ENCODE measurements at regions of chr5 and their contacts with region 1.

Region 1: DNA sequence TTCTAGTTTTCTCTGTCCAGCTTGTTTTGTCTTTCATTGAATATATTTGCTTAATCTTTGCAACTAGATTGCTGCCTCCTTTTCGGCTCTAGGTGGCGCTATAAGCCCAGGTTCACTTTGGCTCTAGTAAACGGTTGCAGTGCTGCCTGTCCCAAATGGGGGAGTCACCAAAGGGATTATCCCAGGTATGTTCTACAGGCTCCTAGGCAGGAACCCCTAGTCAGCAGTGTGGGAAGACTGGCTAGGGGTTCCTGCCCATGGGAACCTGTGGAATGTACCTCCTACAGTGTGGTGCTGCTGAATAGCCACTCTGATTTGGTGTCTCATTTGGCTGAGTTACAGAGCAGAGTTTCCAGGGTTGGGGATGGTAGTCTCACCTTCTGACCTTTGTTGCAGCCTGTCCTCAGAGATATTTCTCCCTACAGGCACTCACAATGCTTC is 85.2 kb downstream of the ARSB start:
- DNase-seq: no peak
- H3K4me3 ChIP-seq: no peak overlapping the region
- CTCF ChIP-seq: peak; percentile 70

Region 2: GRCh38 chr5:78738693-78739300 is 161.1 kb before region 1 on chr5:
- CTCF ChIA-PET with region 1: no interaction called
- POLR2A ChIA-PET with region 1: no interaction called
- DNase-seq: no peak
- H3K4me3 ChIP-seq: no peak overlapping the region
- CTCF ChIP-seq: no peak

Region 3: DNA sequence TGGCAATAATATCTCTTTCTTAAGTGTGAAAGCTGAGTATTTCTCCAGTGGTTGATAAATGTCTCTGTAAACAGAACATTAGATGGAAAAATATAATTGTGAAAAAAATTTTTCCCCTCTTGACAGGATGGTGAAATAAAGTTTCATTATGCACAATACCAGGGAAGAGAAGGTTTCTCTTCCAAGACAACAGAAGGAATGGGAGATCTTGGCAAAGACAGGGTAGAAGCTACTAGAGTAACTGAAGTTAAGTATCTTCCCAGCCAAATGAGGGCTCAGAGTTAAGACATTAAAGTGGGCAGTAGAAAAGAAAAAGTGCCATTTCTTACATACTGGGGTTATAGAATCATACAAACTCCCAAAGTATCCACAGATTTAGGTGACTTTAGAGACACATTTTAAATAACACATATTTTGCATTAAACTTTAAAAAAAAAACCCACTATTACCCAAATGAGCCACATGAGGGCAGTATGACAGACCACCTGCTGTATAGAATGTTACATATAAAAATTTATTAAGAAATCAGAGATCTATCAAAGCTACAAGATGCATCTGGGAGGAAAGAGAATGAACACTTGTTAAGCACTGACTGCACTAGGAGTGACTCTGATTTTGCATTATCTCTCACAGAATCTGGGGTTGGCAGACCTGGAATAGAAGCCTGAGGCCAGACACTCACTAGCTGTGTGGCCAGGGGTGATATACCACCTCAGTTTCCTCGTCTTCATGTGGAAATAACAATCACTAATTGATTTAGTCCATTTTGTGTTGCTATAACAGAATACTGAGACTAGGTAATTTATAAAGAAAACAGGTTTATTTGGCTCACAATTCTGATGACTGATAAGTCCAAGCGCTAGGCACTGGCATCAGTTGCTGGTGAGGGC is 13.4 kb before region 1 on chr5:
- CTCF ChIA-PET with region 1: interaction called, 94 read pairs
- POLR2A ChIA-PET with region 1: no interaction called
- DNase-seq: no peak
- H3K4me3 ChIP-seq: no peak overlapping the region
- CTCF ChIP-seq: peak; percentile 27

Region 4: DNA sequence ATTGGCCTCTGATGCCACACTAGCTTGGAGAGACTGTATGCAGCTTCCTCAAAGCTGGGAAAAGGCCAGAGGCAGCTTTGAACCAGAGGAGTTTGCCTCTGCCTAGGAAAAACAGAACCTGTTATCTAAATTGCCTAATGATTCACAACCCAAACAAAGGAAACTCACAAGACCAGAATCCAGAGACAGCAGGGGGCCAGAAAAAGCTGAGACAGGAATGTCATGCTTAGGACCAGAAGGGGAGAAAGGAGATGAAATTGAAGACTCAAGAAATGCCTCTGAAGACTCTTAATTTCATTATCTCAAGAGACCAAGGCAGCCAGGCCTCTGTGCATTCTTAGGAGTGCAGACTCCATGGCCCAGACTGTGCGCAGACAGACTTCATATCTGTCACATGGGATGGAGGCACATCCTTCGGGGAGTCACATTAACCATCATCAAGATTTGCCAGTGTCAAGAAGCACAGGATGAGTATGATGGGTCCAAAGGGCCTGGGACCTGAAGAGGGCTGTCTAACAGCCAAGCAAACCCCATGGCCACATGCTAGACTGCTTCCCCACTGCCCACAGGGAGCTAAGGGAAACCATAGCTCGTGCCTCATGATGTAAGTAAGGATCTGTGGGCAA is 27.8 kb after region 1 on chr5:
- CTCF ChIA-PET with region 1: interaction called, 17 read pairs
- POLR2A ChIA-PET with region 1: no interaction called
- DNase-seq: peak; percentile 53
- H3K4me3 ChIP-seq: no peak overlapping the region
- CTCF ChIP-seq: no peak

Region 5: DNA sequence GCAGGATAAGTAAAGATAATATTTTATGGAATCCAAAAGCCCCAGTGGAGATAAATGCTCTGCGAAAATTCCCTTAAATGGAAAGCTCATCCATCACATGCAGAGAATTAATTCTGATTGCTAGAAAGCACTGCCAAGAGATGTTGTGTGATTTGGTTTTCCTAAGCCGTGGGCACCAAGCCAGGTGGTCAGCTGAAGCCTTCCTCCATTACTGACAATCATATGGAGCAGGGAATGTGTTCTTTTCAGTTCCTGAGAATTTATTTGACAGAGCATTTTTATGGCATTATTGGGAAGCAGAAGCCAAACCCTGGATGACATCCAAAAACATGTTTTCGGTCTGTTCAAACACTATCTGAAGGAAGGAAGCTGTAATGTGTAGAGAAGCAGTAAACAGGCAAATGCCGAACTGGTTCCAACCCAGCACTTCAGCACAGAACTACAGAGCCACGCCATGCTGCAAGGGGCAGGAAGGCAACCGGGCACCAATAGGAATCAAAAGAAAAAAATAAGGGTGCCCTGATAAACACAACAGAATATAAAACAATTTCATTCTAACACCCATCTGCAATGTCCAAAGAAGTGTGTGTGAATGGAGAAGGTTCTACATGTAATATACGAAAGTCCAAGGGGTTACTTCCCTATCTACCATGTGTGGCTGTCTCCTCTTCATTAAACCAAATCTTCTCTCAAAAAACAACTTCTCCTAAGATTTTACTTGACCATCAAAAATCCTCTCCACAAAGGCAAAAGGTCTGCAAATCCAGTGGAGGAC is 72.9 kb after region 1 on chr5:
- CTCF ChIA-PET with region 1: interaction called, 191 read pairs
- POLR2A ChIA-PET with region 1: no interaction called
- DNase-seq: no peak
- H3K4me3 ChIP-seq: no peak overlapping the region
- CTCF ChIP-seq: no peak